ENCODE measurements at regions of chr7 and their contacts with region 1.

Region 1: DNA sequence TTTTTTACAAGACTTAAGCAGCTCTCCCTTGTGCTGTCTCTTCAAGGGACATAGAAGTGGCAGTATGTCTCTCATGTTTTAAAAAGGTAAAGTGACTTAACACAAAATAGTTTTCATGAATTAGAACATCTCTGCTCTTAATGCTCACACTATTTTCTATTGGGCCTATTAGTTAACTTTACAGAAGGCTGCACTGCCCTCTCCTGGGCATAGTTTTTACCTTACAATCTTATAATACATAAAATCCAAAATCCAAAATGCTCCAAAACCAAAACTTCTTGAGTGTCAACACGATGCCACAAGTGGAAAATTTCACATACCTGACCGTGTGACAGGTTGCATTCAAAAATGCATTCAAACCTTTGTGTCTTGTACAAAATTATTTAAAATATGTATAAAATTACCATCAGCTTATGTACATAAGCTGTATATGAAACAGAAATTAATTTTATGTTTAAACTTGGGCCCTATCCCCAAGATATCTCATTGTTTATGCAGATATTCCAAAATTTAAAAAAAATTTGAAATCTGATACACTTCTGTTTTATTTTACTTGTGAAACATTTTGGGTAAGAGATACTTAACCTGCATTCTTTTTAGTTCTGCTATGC is 25.8 kb downstream of the TES start:
- DNase-seq: no peak
- H3K4me3 ChIP-seq: no peak overlapping the region
- H3K27ac ChIP-seq: no peak overlapping the region
- H3K27me3 ChIP-seq: no peaks in the 10 kb centered on the region
- CTCF ChIP-seq: peak; percentile 59

Region 2: GRCh38 chr7:116138202-116138801 is 97.8 kb before region 1 on chr7:
- CTCF ChIA-PET with region 1: interaction called, 55 read pairs
- POLR2A ChIA-PET with region 1: no interaction called
- DNase-seq: peak; percentile 57
- H3K4me3 ChIP-seq: no peak overlapping the region
- H3K27ac ChIP-seq: no peak overlapping the region
- H3K27me3 ChIP-seq: no peaks in the 10 kb centered on the region
- CTCF ChIP-seq: peak; percentile 89

Region 3: DNA sequence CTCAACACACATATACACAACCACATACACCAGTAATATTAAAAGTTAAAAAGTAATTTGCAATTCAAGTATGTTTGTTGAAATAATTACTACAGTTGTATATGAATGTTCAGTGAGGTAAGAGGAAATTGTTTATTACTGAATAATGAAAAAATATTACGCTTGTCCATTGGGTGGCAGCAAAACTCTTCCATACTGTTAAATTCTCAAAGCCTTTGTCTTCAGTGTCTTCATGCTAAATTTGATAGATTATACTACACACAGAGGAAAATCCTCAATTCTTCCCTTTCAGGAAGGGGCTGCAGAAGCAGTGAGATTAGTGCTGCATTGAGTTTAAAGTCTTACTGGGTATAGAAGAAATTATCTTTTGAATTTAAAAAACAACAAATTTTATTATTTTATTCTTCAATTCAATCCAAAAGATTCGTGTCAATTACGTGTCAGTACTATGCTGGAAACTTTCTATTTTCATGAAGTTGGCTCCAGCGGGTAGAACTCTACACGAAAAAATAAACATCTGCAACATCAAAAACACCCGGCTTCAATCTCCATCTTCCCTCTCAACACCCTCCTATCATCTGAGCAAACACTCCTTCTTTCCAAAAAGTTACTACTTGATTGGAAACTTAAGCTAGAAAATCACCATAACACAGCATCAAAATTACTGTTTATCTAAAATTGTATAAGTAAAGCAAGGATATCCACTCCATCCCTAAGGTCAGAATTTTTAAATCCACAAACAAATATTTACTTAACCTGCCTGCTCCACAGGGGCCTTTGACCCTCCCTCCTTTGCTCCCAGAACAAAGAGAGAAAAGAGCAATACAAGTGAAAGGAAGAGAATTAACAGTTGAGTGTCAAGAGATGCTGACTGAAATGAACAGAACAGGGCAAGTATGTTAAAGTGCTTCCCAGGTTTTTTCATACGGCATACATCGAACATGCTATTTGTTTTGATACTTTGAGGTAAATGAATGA is 62.8 kb before region 1 on chr7:
- CTCF ChIA-PET with region 1: interaction called, 362 read pairs
- POLR2A ChIA-PET with region 1: interaction called, 3 read pairs
- DNase-seq: peak; percentile 52
- H3K4me3 ChIP-seq: no peak overlapping the region
- H3K27ac ChIP-seq: no peak overlapping the region
- H3K27me3 ChIP-seq: no peaks in the 10 kb centered on the region
- CTCF ChIP-seq: peak; percentile 54

Region 4: GRCh38 chr7:116185956-116186355 is 50.2 kb before region 1 on chr7:
- CTCF ChIA-PET with region 1: interaction called, 362 read pairs
- POLR2A ChIA-PET with region 1: interaction called, 3 read pairs
- DNase-seq: no peak
- H3K4me3 ChIP-seq: no peak overlapping the region
- H3K27ac ChIP-seq: no peak overlapping the region
- H3K27me3 ChIP-seq: no peaks in the 10 kb centered on the region
- CTCF ChIP-seq: no peak

Region 5: DNA sequence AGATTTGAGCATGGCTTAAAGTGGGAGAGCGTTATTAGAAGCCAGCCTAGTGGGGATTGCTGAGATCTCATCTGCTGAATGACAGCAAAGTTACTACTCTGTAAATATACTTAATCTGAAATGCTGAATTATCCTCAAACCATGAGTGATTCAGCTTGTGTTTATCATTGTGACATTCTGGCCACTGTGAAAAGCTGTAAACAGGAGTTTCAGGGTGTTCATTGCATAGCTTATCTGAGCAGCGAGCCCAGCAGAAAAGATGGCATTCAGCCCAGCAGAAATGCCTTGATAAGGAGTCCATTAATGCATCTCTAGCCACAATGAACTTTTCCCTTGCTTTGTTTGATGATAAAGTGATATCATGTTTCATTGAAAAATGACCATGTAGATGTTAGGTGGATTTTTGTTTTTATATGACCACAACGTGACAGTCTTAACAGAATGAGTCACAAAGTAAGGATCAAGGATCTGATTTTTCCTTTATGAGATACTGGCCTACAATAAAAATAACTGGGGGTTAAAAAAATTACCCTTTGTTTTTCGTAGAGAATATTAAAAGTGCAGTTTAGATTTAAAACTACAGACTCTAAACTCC is 18.0 kb before region 1 on chr7:
- CTCF ChIA-PET with region 1: interaction called, 20 read pairs
- POLR2A ChIA-PET with region 1: no interaction called
- DNase-seq: peak; percentile 85
- H3K4me3 ChIP-seq: no peak overlapping the region
- H3K27ac ChIP-seq: no peak overlapping the region
- H3K27me3 ChIP-seq: no peaks in the 10 kb centered on the region
- CTCF ChIP-seq: 0 out of 2 replicates have a peak, but pooled peaks have one; percentile 6

Region 6: GRCh38 chr7:116249708-116250553 is 13.8 kb after region 1 on chr7:
- CTCF ChIA-PET with region 1: interaction called, 13 read pairs
- POLR2A ChIA-PET with region 1: no interaction called
- DNase-seq: no peak
- H3K4me3 ChIP-seq: no peak overlapping the region
- H3K27ac ChIP-seq: no peak overlapping the region
- H3K27me3 ChIP-seq: no peaks in the 10 kb centered on the region
- CTCF ChIP-seq: peak; percentile 66